Breast epithelium (tissue), 4 donors: ENCODE measurements at regions of chr22 and their contacts with region 1.

Region 1: DNA sequence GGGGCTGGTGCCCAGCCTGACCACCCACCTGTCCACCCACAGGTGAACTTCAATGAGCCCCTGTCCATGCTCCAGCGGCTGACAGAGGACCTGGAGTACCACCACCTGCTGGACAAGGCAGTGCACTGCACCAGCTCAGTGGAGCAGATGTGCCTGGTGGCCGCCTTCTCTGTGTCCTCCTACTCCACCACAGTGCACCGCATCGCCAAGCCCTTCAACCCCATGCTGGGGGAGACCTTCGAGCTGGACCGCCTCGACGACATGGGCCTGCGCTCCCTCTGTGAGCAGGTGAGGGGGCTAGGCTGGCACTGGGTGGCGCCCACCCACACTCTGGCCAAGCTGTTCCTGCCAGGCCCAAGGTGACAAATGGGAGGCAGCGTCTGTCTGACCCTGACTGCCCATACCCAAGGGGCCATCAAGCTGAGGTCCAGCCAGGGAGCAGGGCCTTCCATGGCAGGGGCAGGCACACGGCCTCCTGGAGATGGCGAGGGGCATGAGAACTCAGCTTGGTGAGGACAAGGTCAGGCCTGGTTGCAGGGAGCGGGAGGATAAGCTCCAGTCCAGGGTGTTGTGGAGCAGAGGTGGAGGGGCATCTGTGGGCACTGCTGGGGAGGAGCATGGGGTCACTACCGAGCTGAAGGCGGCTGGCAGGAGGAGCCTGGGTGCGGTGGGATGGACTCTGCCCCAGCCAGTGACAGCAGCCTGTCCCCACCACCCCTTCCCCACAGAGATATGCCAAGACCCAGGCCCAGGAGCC is 77.7 kb downstream of the MORC2 start:
- DNase-seq: no peak
- H3K4me3 ChIP-seq: no peak overlapping the region
- H3K27ac ChIP-seq: no peak overlapping the region
- H3K4me1 ChIP-seq: no peaks in the 10 kb centered on the region
- H3K27me3 ChIP-seq: no peaks in the 10 kb centered on the region
- CTCF ChIP-seq: peak in 2 of 3 donors; percentile 57 to 62
- POLR2A ChIP-seq: no peak

Region 2: GRCh38 chr22:30628491-30628890 is 262.4 kb before region 1 on chr22:
- intact Hi-C with region 1: loop called (anchors 2 kb)
- DNase-seq: no peak
- H3K4me3 ChIP-seq: no peak overlapping the region
- H3K27ac ChIP-seq: no peak overlapping the region
- H3K4me1 ChIP-seq: no peaks in the 10 kb centered on the region
- H3K27me3 ChIP-seq: no peaks in the 10 kb centered on the region
- CTCF ChIP-seq: no peak
- POLR2A ChIP-seq: no peak

Region 3: DNA sequence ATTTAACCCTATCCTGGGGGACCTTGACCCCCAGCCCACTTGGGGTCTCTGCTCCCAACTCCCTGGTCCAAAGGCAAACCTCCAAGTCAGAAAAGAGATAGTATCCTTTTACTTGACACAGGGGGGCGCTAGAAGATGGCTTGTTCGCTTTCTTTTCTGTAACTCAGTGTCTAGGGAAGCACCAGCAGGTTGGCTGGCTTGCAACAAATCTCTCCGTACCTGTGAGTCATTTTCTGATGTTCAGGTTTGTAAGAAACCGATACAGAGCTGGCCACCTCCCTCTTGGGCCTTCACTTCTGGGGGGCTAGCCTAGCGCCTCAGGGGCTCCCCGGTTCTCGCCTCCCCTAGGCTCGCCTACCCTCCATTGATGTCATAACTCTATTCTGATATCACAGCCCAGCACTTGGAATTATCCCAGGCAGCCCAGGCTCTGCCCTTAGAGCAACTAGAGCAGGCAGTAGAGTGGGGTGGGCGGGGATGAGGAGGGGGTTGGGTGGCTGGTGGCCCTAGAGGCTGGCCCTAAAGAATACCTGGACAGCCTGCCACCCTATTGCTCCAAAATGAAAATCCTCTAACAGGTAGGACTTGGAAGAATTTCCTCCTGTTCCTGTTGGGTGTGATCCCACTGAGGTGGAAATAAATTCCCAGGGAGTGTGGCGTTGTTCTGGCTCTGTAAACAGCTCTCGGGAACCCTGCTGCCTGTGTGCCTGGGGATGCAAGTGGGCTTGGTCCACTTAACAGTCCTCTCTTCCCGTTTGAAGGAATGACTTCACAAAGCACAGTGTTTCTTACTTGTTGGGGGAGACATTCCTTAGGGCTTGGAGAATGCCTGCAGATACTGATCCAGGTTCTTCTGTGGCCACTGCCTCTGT is 126.8 kb before region 1 on chr22:
- intact Hi-C with region 1: loop called (anchors 10 kb)
- DNase-seq: peak in 1 of 2 donors; percentile 53
- H3K4me3 ChIP-seq: no peak overlapping the region
- H3K27ac ChIP-seq: no peak overlapping the region
- H3K4me1 ChIP-seq: no peaks in the 10 kb centered on the region
- H3K27me3 ChIP-seq: no peaks in the 10 kb centered on the region
- CTCF ChIP-seq: peak; percentile 14 to 61 (median 60)
- POLR2A ChIP-seq: no peak